ENCODE measurements at regions of chr17 and their contacts with region 1.

Region 1: GRCh38 chr17:47840740-47841603 is at the start of gene SCRN2:
- DNase-seq: peak; percentile 89 to 97 (median 97)
- ATAC-seq: peak; percentile 90
- H3K4me3 ChIP-seq: peak within 1 kb of the TSS; percentile 62
- H3K27ac ChIP-seq: peak within 1 kb of the TSS; percentile 37
- H3K4me1 ChIP-seq: peaks cover 3% of the 10 kb centered on the region
- H3K27me3 ChIP-seq: no peaks in the 10 kb centered on the region
- total RNA-seq, gene SCRN2: 36.6 to 51.8 (median 40.9) TPM

Region 2: DNA sequence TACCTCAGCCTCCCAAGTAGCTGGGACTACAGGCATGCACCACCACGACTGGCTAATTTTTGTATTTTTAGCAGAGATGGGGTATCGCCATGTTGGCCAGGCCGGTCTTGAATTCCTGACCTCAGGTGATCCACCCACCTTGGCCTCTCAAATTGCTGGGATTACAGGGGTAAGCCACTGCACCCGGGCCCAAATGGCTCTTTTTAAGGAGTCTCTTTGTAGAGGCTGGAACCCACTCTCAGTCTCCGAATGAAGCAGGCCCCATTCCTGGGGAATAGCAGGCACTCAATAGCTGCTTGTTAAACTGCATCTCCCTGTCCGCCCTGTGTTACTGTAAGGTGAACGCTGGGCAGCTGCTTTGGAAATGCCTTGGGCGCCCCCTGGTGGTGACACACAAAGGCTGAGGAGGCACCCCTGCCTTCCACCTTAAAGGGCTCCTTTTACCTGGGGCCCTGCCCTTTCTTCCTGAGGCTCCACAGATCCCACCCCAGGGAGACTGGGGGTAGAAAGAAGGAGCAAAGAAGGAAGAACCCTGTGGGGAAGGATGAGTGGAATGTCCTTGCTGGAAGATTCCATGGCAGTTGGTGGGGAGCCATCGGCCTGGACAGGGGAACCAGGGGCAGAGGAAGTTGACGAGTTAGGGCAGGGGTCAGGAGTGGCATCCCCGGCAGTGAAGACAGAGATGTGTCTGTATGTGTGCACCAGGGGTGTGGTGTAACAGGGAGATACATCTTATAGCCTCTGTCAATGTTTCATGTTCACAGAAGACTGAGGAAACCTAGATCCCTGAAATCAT is 49.0 kb after region 1 on chr17:
- intact Hi-C with region 1: loop called (anchors 1 to 2 kb)
- DNase-seq: peak; percentile 90 to 95 (median 94)
- ATAC-seq: peak; percentile 87 to 88
- H3K4me3 ChIP-seq: no peak overlapping the region
- H3K27ac ChIP-seq: no peak overlapping the region
- H3K4me1 ChIP-seq: no peaks in the 10 kb centered on the region
- H3K27me3 ChIP-seq: no peaks in the 10 kb centered on the region

Region 3: DNA sequence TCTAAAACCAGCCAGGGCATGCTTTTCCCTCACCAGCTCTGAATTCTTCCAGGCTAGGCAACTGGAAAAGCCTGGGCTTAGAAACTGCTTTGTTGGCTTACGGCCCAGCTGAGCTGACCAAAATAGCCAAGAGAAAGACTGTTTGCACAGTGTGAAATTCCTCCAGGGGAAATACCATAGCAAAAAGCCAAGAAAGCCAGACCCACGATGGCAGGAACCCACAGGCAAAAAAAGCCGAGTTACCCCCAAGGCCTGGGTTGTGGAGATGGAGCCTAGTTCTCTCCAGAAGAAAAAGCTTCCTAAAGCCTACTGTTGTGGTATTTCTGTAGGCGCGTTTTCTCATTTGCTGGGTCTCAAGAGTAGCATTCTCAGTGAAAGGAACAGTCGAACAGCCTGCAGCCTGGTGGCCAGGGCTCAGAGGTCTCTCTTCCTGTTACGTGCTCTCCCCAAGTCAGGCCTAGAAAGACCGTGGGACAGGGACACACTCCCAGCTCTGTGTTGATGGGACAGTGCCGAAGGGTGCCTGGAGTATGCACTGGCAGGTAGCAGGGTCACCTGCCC is 64.3 kb after region 1 on chr17:
- intact Hi-C with region 1: no loop called
- DNase-seq: peak; percentile 80 to 93 (median 89)
- ATAC-seq: peak; percentile 83 to 90
- H3K4me3 ChIP-seq: no peak overlapping the region
- H3K27ac ChIP-seq: peak overlapping the region; percentile 94
- H3K4me1 ChIP-seq: peaks cover 34% of the 10 kb centered on the region
- H3K27me3 ChIP-seq: no peaks in the 10 kb centered on the region

Region 4: GRCh38 chr17:47941236-47941994 is 100.4 kb after region 1 on chr17 and contains the start of gene PNPO:
- intact Hi-C with region 1: loop called in 1 of 4 experiments (anchors 10 kb)
- DNase-seq: peak; percentile 94 to 96 (median 95)
- ATAC-seq: peak; percentile 98
- H3K4me3 ChIP-seq: peak within 1 kb of the TSS; percentile 47
- H3K27ac ChIP-seq: peak within 1 kb of the TSS; percentile 8
- H3K4me1 ChIP-seq: peaks cover 3% of the 10 kb centered on the region
- H3K27me3 ChIP-seq: no peaks in the 10 kb centered on the region
- total RNA-seq, gene PNPO: 23.9 to 29.9 (median 26.0) TPM

Region 5: GRCh38 chr17:47970704-47971463 is 129.9 kb after region 1 on chr17 and contains the start of gene CDK5RAP3:
- intact Hi-C with region 1: loop called in 3 of 4 experiments (anchors 5 to 10 kb)
- DNase-seq: peak; percentile 100
- ATAC-seq: peak; percentile 99 to 100
- H3K4me3 ChIP-seq: peak within 1 kb of the TSS; percentile 57
- H3K27ac ChIP-seq: peak within 1 kb of the TSS; percentile 21
- H3K4me1 ChIP-seq: no peaks in the 10 kb centered on the region
- H3K27me3 ChIP-seq: no peaks in the 10 kb centered on the region
- total RNA-seq, gene CDK5RAP3: 56.8 to 66.8 (median 64.9) TPM

Region 6: DNA sequence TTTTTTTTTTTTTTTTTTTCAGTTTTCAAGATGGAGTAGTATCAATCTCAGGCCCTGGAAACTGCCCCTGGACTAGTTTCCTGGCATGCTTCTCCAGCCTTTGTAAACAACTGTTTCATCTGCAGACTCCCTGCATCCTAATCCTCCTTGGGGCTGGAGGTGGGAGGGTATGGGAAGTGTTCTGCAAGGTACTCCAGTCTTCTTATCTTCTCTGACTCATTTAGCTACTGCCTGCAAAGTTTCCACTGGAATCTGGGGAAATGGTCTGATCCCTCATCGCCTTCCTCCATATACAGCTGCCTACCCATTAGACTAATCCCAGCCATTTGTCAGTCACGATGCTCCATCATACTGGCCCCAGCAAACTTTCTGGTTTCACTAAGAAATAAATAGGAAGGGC is 175.1 kb after region 1 on chr17:
- intact Hi-C with region 1: loop called in 1 of 4 experiments (anchors 5 kb)
- DNase-seq: no peak
- ATAC-seq: no peak
- H3K4me3 ChIP-seq: no peak overlapping the region
- H3K27ac ChIP-seq: no peak overlapping the region
- H3K4me1 ChIP-seq: no peaks in the 10 kb centered on the region
- H3K27me3 ChIP-seq: no peaks in the 10 kb centered on the region

Measured in right cardiac atrium (tissue), 5 donors.